CD4-positive, alpha-beta T cell (primary cell): ENCODE measurements at regions of chr1 and their contacts with region 1.

Region 1: GRCh38 chr1:182839209-182840065 is at the start of gene DHX9:
- DNase-seq: peak; percentile 92 to 99 (median 96)
- ATAC-seq: peak; percentile 83
- H3K4me3 ChIP-seq: peak within 1 kb of the TSS; percentile 66
- H3K4me3 Mint-ChIP-seq: peak within 1 kb of the TSS; percentile 92
- H3K27ac ChIP-seq: peak within 1 kb of the TSS; percentile 85 to 87
- H3K27ac Mint-ChIP-seq: peak within 1 kb of the TSS; percentile 90
- H3K4me1 ChIP-seq: peaks cover 26% of the 10 kb centered on the region
- H3K4me1 Mint-ChIP-seq: peaks cover 54% of the 10 kb centered on the region
- H3K27me3 ChIP-seq: no peaks in the 10 kb centered on the region
- H3K27me3 Mint-ChIP-seq: no peaks in the 10 kb centered on the region
- CTCF ChIP-seq: peak; percentile 31
- total RNA-seq, gene DHX9: 338 to 353 TPM

Region 2: DNA sequence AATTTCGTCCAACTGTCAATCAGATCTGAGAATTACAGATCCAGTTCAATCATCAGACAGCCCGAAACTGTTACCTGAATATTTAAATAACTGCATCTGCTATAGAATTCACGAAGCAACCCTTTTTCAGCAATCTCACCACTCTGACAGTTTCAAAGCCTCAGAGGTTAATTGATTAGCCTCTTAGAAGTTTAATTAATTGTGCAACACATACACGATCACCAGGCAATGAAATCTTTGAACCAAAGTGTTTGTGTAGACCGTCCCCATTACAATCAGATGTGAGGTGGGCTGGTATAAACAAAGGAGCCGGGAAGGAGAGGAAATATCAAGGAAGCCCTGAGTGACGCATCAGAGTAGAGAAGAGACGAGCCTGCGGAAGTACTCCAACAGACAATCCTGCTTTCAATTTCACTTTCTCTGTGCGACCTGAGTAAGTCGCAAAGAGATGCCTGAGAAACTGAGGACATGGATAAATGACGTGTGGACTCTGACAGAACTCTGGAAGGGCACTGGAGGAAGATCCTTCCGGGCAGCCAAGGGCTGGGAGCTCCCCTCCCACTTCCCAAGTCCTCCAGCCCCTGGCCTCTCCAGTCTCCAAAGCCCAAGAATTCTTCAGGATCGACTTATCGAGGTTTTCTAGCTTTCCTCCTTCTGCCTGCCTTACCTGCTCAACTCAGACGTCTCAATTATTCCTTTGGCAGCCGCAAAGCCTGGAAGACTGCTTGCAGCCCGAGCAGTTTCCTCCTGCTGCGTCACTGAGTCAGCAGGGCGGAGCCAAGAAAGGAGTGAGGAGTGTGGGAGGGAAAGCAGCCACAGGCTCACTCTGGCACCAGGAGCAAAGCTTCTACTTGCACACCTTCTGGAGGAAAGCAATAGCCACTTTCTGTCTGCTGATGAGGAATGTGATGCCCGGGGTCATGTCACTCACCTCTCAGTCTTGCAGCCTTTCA is 250.7 kb before region 1 on chr1 and contains the start of gene RNASEL:
- CTCF ChIA-PET with region 1: no interaction called
- POLR2A ChIA-PET with region 1: interaction called, 9 read pairs
- intact Hi-C with region 1: loop called in 1 of 2 experiments (anchors 5 kb)
- DNase-seq: peak; percentile 28 to 85 (median 54)
- ATAC-seq: peak; percentile 85
- H3K4me3 ChIP-seq: peak within 1 kb of the TSS; percentile 83
- H3K4me3 Mint-ChIP-seq: peak within 1 kb of the TSS; percentile 95
- H3K27ac ChIP-seq: peak within 1 kb of the TSS; percentile 89 to 97
- H3K27ac Mint-ChIP-seq: peak within 1 kb of the TSS; percentile 99
- H3K4me1 ChIP-seq: peaks cover 28% of the 10 kb centered on the region
- H3K4me1 Mint-ChIP-seq: peaks cover 52% of the 10 kb centered on the region
- H3K27me3 ChIP-seq: no peaks in the 10 kb centered on the region
- H3K27me3 Mint-ChIP-seq: no peaks in the 10 kb centered on the region
- CTCF ChIP-seq: no peak
- total RNA-seq, gene RNASEL: 3.5 to 3.7 TPM

Region 3: GRCh38 chr1:182604169-182605164 is 235.0 kb before region 1 on chr1 and contains the start of gene RGS16:
- CTCF ChIA-PET with region 1: no interaction called
- POLR2A ChIA-PET with region 1: interaction called, 3 read pairs
- intact Hi-C with region 1: loop called in 1 of 2 experiments (anchors 5 kb)
- DNase-seq: peak; percentile 77 to 96 (median 90)
- ATAC-seq: peak; percentile 88
- H3K4me3 ChIP-seq: peak within 1 kb of the TSS; percentile 58
- H3K4me3 Mint-ChIP-seq: peak within 1 kb of the TSS; percentile 83
- H3K27ac ChIP-seq: no peak within 1 kb of the TSS
- H3K27ac Mint-ChIP-seq: no peak within 1 kb of the TSS
- H3K4me1 ChIP-seq: peaks cover 36% of the 10 kb centered on the region
- H3K4me1 Mint-ChIP-seq: no peaks in the 10 kb centered on the region
- H3K27me3 ChIP-seq: no peaks in the 10 kb centered on the region
- H3K27me3 Mint-ChIP-seq: peaks cover 16% of the 10 kb centered on the region
- CTCF ChIP-seq: no peak
- total RNA-seq, gene RGS16: 16.3 to 16.4 TPM

Region 4: GRCh38 chr1:182778862-182779261 is 60.6 kb before region 1 on chr1:
- CTCF ChIA-PET with region 1: no interaction called
- POLR2A ChIA-PET with region 1: no interaction called
- intact Hi-C with region 1: no loop called
- DNase-seq: no peak
- ATAC-seq: no peak
- H3K4me3 ChIP-seq: no peak overlapping the region
- H3K4me3 Mint-ChIP-seq: no peak overlapping the region
- H3K27ac ChIP-seq: no peak overlapping the region
- H3K27ac Mint-ChIP-seq: no peak overlapping the region
- H3K4me1 ChIP-seq: peaks cover 5% of the 10 kb centered on the region
- H3K4me1 Mint-ChIP-seq: peaks cover 4% of the 10 kb centered on the region
- H3K27me3 ChIP-seq: peaks cover 0 to 2% of the 10 kb centered on the region in 2 experiments
- H3K27me3 Mint-ChIP-seq: peaks cover 9% of the 10 kb centered on the region
- CTCF ChIP-seq: no peak

Region 5: GRCh38 chr1:182789138-182790076 is 50.0 kb before region 1 on chr1 and contains the start of gene NPL:
- CTCF ChIA-PET with region 1: interaction called, 3 read pairs
- POLR2A ChIA-PET with region 1: interaction called, 7 read pairs
- intact Hi-C with region 1: loop called (anchors 1 to 2 kb)
- DNase-seq: peak; percentile 71 to 94 (median 82)
- ATAC-seq: peak; percentile 97
- H3K4me3 ChIP-seq: peak within 1 kb of the TSS; percentile 66
- H3K4me3 Mint-ChIP-seq: peak within 1 kb of the TSS; percentile 96
- H3K27ac ChIP-seq: peak within 1 kb of the TSS in 1 of 2 donors; percentile 51
- H3K27ac Mint-ChIP-seq: peak within 1 kb of the TSS; percentile 77
- H3K4me1 ChIP-seq: peaks cover 10% of the 10 kb centered on the region
- H3K4me1 Mint-ChIP-seq: peaks cover 7% of the 10 kb centered on the region
- H3K27me3 ChIP-seq: no peaks in the 10 kb centered on the region
- H3K27me3 Mint-ChIP-seq: no peaks in the 10 kb centered on the region
- CTCF ChIP-seq: no peak
- total RNA-seq, gene NPL: 0.63 to 1.7 TPM

Region 6: DNA sequence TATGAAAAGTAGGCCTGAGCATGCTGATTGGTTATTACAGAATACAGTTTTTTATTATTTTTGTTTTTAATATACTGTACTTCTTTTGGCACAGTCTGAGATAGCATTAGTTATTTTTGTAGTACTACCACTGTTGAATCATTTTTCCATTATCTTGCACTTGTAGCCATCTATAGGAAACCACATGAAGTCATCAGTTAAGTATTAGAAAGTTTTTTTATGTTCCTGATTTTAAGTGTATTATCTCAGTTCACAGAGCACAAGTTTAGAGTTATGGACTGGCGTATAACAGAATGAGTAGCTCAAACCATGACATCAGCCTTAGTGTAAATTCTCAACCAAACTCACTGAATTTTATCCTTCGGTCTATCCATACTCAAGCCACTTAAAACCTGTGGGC is 22.6 kb after region 1 on chr1:
- CTCF ChIA-PET with region 1: interaction called, 3 read pairs
- POLR2A ChIA-PET with region 1: interaction called, 3 read pairs
- intact Hi-C with region 1: loop called in 1 of 2 experiments (anchors 2 kb)
- DNase-seq: no peak
- ATAC-seq: peak; percentile 24
- H3K4me3 ChIP-seq: no peak overlapping the region
- H3K4me3 Mint-ChIP-seq: no peak overlapping the region
- H3K27ac ChIP-seq: no peak overlapping the region
- H3K27ac Mint-ChIP-seq: no peak overlapping the region
- H3K4me1 ChIP-seq: no peaks in the 10 kb centered on the region
- H3K4me1 Mint-ChIP-seq: peaks cover 18% of the 10 kb centered on the region
- H3K27me3 ChIP-seq: no peaks in the 10 kb centered on the region
- H3K27me3 Mint-ChIP-seq: no peaks in the 10 kb centered on the region
- CTCF ChIP-seq: no peak

Region 7: GRCh38 chr1:182889997-182890396 is 50.6 kb after region 1 on chr1:
- CTCF ChIA-PET with region 1: no interaction called
- POLR2A ChIA-PET with region 1: no interaction called
- intact Hi-C with region 1: loop called in 1 of 2 experiments (anchors 5 kb)
- DNase-seq: peak in 4 of 14 experiments; percentile 4 to 44 (median 30)
- ATAC-seq: peak; percentile 64
- H3K4me3 ChIP-seq: no peak overlapping the region
- H3K4me3 Mint-ChIP-seq: no peak overlapping the region
- H3K27ac ChIP-seq: no peak overlapping the region
- H3K27ac Mint-ChIP-seq: peak overlapping the region; percentile 42
- H3K4me1 ChIP-seq: peaks cover 6% of the 10 kb centered on the region
- H3K4me1 Mint-ChIP-seq: peaks cover 28% of the 10 kb centered on the region
- H3K27me3 ChIP-seq: no peaks in the 10 kb centered on the region
- H3K27me3 Mint-ChIP-seq: no peaks in the 10 kb centered on the region
- CTCF ChIP-seq: no peak

Region 8: DNA sequence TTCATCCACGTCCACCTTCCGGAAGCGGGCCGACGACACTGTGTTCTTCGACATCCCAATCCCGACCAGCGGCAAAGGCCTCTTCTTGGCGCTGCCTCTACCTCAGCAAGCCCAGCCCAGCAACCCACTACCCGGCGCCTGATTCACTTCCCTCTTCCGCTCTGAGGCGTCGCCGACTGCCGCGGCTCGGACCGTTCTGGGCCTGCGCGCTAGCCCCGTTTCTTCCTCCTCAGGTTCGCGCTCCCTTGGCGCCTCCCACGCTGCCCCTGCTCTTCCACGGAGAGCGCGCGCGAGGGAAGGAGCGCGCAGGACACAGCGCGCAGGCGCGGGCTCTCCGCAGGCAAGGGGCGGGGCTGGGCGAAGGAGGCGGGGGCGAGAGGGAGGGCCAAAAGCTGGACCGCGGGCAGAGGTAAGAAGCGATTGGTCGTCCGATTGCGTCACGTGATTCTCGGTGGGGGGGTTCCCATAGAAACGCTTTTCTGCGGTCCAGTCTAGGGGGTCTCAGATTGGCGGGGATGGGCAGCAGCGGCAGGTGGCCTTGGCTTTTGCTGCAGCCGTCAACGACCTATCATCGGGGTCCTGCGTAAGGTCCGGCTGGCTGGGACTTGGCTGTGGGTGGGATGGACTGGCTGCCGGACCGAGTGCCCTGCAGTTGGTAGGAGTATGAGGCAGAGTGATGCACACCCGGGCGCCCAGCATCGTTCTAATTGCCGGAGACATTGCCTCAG is 796.3 kb after region 1 on chr1 and contains the start of gene ARPC5:
- CTCF ChIA-PET with region 1: no interaction called
- POLR2A ChIA-PET with region 1: no interaction called
- intact Hi-C with region 1: loop called in 1 of 2 experiments (anchors 5 kb)
- DNase-seq: peak; percentile 91 to 99 (median 94)
- ATAC-seq: peak; percentile 88
- H3K4me3 ChIP-seq: peak within 1 kb of the TSS; percentile 93
- H3K4me3 Mint-ChIP-seq: peak within 1 kb of the TSS; percentile 100
- H3K27ac ChIP-seq: peak within 1 kb of the TSS; percentile 61 to 86
- H3K27ac Mint-ChIP-seq: peak within 1 kb of the TSS; percentile 94
- H3K4me1 ChIP-seq: peaks cover 17% of the 10 kb centered on the region
- H3K4me1 Mint-ChIP-seq: peaks cover 51% of the 10 kb centered on the region
- H3K27me3 ChIP-seq: no peaks in the 10 kb centered on the region
- H3K27me3 Mint-ChIP-seq: no peaks in the 10 kb centered on the region
- CTCF ChIP-seq: no peak
- total RNA-seq, gene ARPC5: 21.4 to 23.0 TPM